IMR-90 (cell line): ENCODE measurements at regions of chr5 and their contacts with region 1.

Region 1: GRCh38 chr5:55172051-55172899 is 702 bp downstream of the CDC20B start:
- DNase-seq: peak; percentile 78
- ATAC-seq: peak; percentile 45
- H3K4me3 ChIP-seq: peak overlapping the region; percentile 55
- H3K27ac ChIP-seq: no peak overlapping the region
- H3K4me1 ChIP-seq: peaks cover 7% of the 10 kb centered on the region
- H3K27me3 ChIP-seq: peaks cover 28% of the 10 kb centered on the region
- CTCF ChIP-seq: peak; percentile 88
- POLR2A ChIP-seq: no peak
- RAD21 ChIP-seq: peak; percentile 87

Region 2: GRCh38 chr5:54229041-54229780 is 943.1 kb before region 1 on chr5:
- CTCF ChIA-PET with region 1: no interaction called
- POLR2A ChIA-PET with region 1: no interaction called
- dilution Hi-C with region 1: no loop called
- in situ Hi-C with region 1: no loop called
- intact Hi-C with region 1: no loop called
- DNase-seq: peak; percentile 58
- ATAC-seq: peak; percentile 92
- H3K4me3 ChIP-seq: no peak overlapping the region
- H3K27ac ChIP-seq: no peak overlapping the region
- H3K4me1 ChIP-seq: no peaks in the 10 kb centered on the region
- H3K27me3 ChIP-seq: no peaks in the 10 kb centered on the region; the same call in 1 of the 2 replicates
- CTCF ChIP-seq: peak; percentile 85
- POLR2A ChIP-seq: no peak
- RAD21 ChIP-seq: peak; percentile 74

Region 3: GRCh38 chr5:55220391-55221185 is 48.3 kb after region 1 on chr5:
- CTCF ChIA-PET with region 1: no interaction called
- POLR2A ChIA-PET with region 1: no interaction called
- dilution Hi-C with region 1: no loop called
- in situ Hi-C with region 1: no loop called
- intact Hi-C with region 1: loop called (anchors 5 kb)
- DNase-seq: no peak
- ATAC-seq: peak; percentile 67
- H3K4me3 ChIP-seq: peak overlapping the region; percentile 23; the same call in 1 of the 2 replicates
- H3K27ac ChIP-seq: no peak overlapping the region
- H3K4me1 ChIP-seq: peaks cover 2% of the 10 kb centered on the region; the same call in 1 of the 2 replicates
- H3K27me3 ChIP-seq: peaks cover 81% of the 10 kb centered on the region
- CTCF ChIP-seq: no peak
- POLR2A ChIP-seq: no peak
- RAD21 ChIP-seq: no peak

Region 4: GRCh38 chr5:55254802-55255201 is 82.5 kb after region 1 on chr5:
- CTCF ChIA-PET with region 1: no interaction called
- POLR2A ChIA-PET with region 1: no interaction called
- dilution Hi-C with region 1: no loop called
- in situ Hi-C with region 1: no loop called
- intact Hi-C with region 1: loop called (anchors 5 kb)
- DNase-seq: no peak
- ATAC-seq: no peak
- H3K4me3 ChIP-seq: no peak overlapping the region
- H3K27ac ChIP-seq: no peak overlapping the region
- H3K4me1 ChIP-seq: no peaks in the 10 kb centered on the region
- H3K27me3 ChIP-seq: no peaks in the 10 kb centered on the region
- CTCF ChIP-seq: no peak
- POLR2A ChIP-seq: no peak
- RAD21 ChIP-seq: no peak

Region 5: DNA sequence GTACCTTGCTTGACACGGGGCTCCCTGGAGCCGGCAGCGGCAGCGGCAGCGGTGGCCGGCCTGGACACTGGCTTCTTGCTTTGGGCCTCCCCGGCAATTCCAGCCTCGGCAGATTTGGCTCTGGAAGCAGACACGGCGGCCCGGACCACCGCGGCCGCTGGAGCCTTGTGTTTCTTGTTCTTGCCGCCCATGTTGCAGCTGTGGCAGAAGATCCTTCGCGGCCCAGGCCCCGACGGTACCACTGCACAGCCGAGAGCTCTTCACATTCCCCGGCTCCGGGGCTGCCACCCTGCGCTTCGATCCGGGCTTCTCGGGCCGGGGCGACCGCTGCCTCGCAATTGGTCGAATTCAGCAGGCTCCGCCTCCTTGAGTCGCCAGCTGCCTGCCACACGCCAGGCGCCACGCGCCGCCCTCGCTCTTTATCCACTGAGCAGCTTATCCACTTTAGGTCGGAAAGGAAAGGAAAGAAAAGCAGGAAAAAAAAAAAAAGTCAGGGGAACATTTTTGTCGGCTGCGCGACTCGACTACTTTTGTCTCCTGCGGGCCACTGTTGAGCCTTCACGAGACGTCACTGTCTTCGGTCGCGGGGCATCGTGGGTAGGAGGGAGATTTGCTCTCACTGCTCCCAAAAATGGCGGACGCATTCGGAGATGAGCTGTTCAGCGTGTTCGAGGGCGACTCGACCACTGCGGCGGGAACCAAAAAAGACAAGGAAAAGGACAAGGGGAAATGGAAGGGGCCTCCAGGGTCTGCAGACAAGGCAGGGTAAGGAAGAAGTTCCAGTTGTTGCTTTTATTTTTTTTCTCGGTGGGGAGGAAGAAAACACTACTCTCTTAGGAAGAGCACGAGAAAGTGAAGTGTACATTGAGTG is 135.3 kb after region 1 on chr5 and contains the starts of genes DHX29 and MTREX:
- CTCF ChIA-PET with region 1: no interaction called
- POLR2A ChIA-PET with region 1: no interaction called
- dilution Hi-C with region 1: no loop called
- in situ Hi-C with region 1: no loop called
- intact Hi-C with region 1: loop called (anchors 5 kb)
- DNase-seq: peak; percentile 91
- ATAC-seq: peak; percentile 90
- H3K4me3 ChIP-seq: peak within 1 kb of the TSS; percentile 71
- H3K27ac ChIP-seq: peak within 1 kb of the TSS; percentile 58
- H3K4me1 ChIP-seq: peaks cover 3% of the 10 kb centered on the region
- H3K27me3 ChIP-seq: no peaks in the 10 kb centered on the region
- CTCF ChIP-seq: no peak
- POLR2A ChIP-seq: peak; percentile 90
- RAD21 ChIP-seq: no peak
- total RNA-seq, gene DHX29: 25.6 and 35.6 TPM in 2 replicates
- total RNA-seq, gene MTREX: 33.2 and 83.3 TPM in 2 replicates

Region 6: GRCh38 chr5:55936100-55936693 is 763.9 kb after region 1 on chr5:
- CTCF ChIA-PET with region 1: no interaction called
- POLR2A ChIA-PET with region 1: no interaction called
- dilution Hi-C with region 1: no loop called
- in situ Hi-C with region 1: no loop called
- intact Hi-C with region 1: loop called (anchors 5 kb)
- DNase-seq: peak; percentile 92
- ATAC-seq: peak; percentile 74
- H3K4me3 ChIP-seq: no peak overlapping the region
- H3K27ac ChIP-seq: no peak overlapping the region
- H3K4me1 ChIP-seq: no peaks in the 10 kb centered on the region
- H3K27me3 ChIP-seq: no peaks in the 10 kb centered on the region
- CTCF ChIP-seq: peak; percentile 91
- POLR2A ChIP-seq: no peak
- RAD21 ChIP-seq: peak; percentile 83